MCF 10A (cell line): ENCODE measurements at regions of chr12 and their contacts with region 1.

Region 1: GRCh38 chr12:19893514-19893913 is 454.2 kb downstream of the AEBP2 start:
- DNase-seq: peak; percentile 38
- H3K4me3 Mint-ChIP-seq: no peak overlapping the region
- H3K27ac Mint-ChIP-seq: no peak overlapping the region
- H3K4me1 Mint-ChIP-seq: peaks cover 6% of the 10 kb centered on the region
- H3K27me3 Mint-ChIP-seq: peaks cover 57% of the 10 kb centered on the region
- CTCF ChIP-seq: peak; percentile 24

Region 2: DNA sequence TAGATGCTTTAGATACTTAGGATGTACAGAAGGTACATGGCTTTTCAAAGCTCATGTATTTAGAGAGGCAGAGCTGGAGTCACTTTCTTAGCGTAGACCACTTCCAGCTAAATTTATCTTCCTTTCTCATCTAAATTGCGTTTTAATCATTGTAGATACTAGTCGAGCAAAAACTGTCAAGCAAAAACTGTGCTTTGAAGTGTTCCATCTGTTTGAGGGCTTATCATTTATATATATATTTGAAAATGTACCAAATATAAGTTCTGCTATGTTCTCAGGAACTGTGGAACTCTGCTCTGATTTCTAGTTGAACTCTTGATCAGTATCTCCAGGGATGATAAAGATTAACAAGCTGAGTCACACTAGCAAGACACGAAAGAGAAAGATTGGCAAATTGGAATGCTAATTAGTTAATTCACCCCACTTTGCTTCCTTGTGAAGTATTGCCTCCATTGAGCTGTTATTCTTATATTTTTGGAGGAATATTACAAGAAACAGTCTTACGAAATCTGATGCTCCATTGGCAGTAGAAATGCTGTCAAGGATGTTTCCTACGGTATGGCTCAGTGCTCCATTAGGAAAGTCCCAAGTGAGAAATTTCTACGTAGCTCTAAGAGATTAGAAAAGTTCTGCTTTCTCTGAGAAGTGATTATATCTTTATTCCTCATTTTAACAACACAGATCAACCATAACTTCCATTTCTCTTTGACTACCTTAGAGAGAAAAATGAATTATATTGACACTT is 143.4 kb before region 1 on chr12:
- CTCF ChIA-PET with region 1: interaction called, 17 read pairs
- POLR2A ChIA-PET with region 1: no interaction called
- intact Hi-C with region 1: no loop called
- DNase-seq: no peak
- H3K4me3 Mint-ChIP-seq: no peak overlapping the region
- H3K27ac Mint-ChIP-seq: no peak overlapping the region
- H3K4me1 Mint-ChIP-seq: peaks cover under 1% of the 10 kb centered on the region
- H3K27me3 Mint-ChIP-seq: peaks cover 9% of the 10 kb centered on the region
- CTCF ChIP-seq: no peak

Region 3: GRCh38 chr12:19925841-19926240 is 32.3 kb after region 1 on chr12:
- CTCF ChIA-PET with region 1: no interaction called
- POLR2A ChIA-PET with region 1: no interaction called
- intact Hi-C with region 1: no loop called
- DNase-seq: no peak
- H3K4me3 Mint-ChIP-seq: no peak overlapping the region
- H3K27ac Mint-ChIP-seq: no peak overlapping the region
- H3K4me1 Mint-ChIP-seq: no peaks in the 10 kb centered on the region
- H3K27me3 Mint-ChIP-seq: peaks cover 74% of the 10 kb centered on the region
- CTCF ChIP-seq: no peak